CD8-positive, alpha-beta memory T cell (primary cell): ENCODE measurements at regions of chr7 and their contacts with region 1.

Region 1: GRCh38 chr7:139645572-139646523 is 122.4 kb downstream of the CLEC2L start:
- DNase-seq: peak; percentile 65 to 82 (median 75)
- H3K4me3 ChIP-seq: no peak overlapping the region
- H3K4me3 Mint-ChIP-seq: no peak overlapping the region
- H3K27ac ChIP-seq: no peak overlapping the region
- H3K27ac Mint-ChIP-seq: peak overlapping the region in 3 of 8 donors; percentile 56 to 89 (median 63)
- H3K4me1 ChIP-seq: peaks cover 76% of the 10 kb centered on the region
- H3K4me1 Mint-ChIP-seq: peaks cover 25 to 44% (median 29%) of the 10 kb centered on the region in 3 donors
- H3K27me3 ChIP-seq: no peaks in the 10 kb centered on the region
- H3K27me3 Mint-ChIP-seq: no peaks in the 10 kb centered on the region

Region 2: DNA sequence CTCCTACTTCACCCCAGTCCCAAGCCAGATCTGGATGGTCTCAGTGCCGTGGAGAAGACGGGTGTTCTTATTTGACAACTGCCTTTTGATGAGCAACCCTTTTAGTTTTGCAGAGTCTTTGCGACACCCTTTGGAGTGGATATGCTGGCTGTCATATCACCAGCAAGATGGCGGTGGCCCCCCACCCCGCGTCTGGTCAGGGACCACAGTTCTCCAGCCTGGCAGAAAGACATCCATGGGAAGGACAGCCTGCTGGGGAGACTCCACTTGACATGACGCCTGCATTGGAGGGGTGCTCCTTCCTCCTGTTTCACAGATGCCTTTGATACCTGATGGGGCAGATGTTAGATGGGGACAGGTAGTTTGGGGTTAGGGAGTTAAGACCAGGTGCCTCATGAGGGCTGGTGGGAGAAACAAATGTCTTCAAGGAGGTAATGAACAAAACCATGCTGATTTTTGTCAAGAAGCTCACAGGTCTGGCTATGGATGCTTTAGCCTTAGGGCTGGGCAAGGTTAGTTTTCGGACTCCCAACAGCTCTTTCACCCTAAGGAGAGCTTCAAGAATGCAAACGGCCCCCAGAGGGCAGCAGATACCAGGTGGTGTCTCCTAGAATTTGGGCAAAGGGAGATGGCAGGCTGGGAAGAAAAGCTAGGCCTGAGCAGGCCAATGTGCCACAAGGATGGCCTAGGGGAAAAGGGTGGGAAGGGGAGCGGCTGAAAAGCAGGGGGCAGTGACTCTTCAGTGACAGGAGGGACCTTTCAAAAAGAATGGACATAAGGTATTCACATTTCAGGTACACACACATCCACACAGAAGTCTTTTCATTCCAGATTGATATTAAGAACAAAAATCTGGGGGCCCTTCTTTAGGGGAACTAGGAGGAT is 27.1 kb before region 1 on chr7:
- CTCF ChIA-PET with region 1: interaction called, 19 read pairs
- POLR2A ChIA-PET with region 1: no interaction called
- DNase-seq: peak in 1 of 5 donors; percentile 43
- H3K4me3 ChIP-seq: no peak overlapping the region
- H3K4me3 Mint-ChIP-seq: no peak overlapping the region
- H3K27ac ChIP-seq: no peak overlapping the region
- H3K27ac Mint-ChIP-seq: peak overlapping the region in 2 of 8 donors; percentile 38 to 51
- H3K4me1 ChIP-seq: no peaks in the 10 kb centered on the region
- H3K4me1 Mint-ChIP-seq: peaks cover 0 to 2% (median 0%) of the 10 kb centered on the region in 3 donors
- H3K27me3 ChIP-seq: no peaks in the 10 kb centered on the region
- H3K27me3 Mint-ChIP-seq: no peaks in the 10 kb centered on the region

Region 3: DNA sequence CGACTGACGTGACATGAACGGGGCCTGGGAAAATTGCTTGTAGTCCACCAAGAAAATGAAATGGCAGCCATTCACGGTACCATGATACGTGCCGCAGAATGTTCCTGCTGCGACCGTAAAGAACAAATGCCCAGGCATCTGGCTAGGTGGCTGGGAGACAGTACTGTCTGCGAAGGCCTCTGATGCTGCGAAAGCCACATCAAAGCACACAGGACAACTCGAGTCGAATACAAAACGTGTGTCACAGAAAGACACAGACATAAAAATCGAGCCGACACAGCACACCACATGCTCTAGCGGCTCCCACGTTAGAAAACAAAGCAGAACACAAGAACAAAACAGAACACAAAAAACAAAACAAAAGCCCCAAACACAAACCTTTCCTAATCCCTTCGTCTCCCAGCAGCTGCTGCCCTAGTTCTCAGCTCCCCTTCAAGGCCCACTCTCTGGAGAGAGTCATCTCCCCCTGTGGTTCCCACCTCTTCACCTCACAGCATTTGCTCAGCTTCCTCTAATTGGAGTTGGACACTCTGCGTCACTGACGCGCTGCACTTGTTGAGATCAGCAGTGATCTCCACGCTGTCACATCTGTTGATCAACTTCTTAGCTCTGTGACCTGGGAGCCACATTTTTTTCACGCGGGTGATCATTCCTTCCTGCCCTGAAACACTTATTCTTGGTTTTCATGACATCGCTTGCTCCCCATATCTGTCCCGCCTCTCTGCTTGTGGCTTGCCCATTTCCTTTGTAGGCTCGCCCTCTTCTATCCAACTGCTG is 10.1 kb before region 1 on chr7:
- CTCF ChIA-PET with region 1: interaction called, 10 read pairs
- POLR2A ChIA-PET with region 1: interaction called, 3 read pairs
- DNase-seq: peak in 3 of 5 donors; percentile 80 to 84 (median 84)
- H3K4me3 ChIP-seq: peak overlapping the region; percentile 11
- H3K4me3 Mint-ChIP-seq: peak overlapping the region; percentile 1 to 75 (median 66)
- H3K27ac ChIP-seq: no peak overlapping the region
- H3K27ac Mint-ChIP-seq: peak overlapping the region in 7 of 8 donors; percentile 73 to 95 (median 88)
- H3K4me1 ChIP-seq: peaks cover 61% of the 10 kb centered on the region
- H3K4me1 Mint-ChIP-seq: peaks cover 22 to 34% (median 26%) of the 10 kb centered on the region in 3 donors
- H3K27me3 ChIP-seq: no peaks in the 10 kb centered on the region
- H3K27me3 Mint-ChIP-seq: peaks cover 0 to 4% of the 10 kb centered on the region in 2 donors

Region 4: GRCh38 chr7:139875821-139876241 is 230.0 kb after region 1 on chr7:
- CTCF ChIA-PET with region 1: no interaction called
- POLR2A ChIA-PET with region 1: no interaction called
- DNase-seq: no peak
- H3K4me3 ChIP-seq: no peak overlapping the region
- H3K4me3 Mint-ChIP-seq: no peak overlapping the region
- H3K27ac ChIP-seq: no peak overlapping the region
- H3K27ac Mint-ChIP-seq: no peak overlapping the region
- H3K4me1 ChIP-seq: no peaks in the 10 kb centered on the region
- H3K4me1 Mint-ChIP-seq: peaks cover 0 to 3% (median 2%) of the 10 kb centered on the region in 3 donors
- H3K27me3 ChIP-seq: no peaks in the 10 kb centered on the region
- H3K27me3 Mint-ChIP-seq: peaks cover 2 to 9% of the 10 kb centered on the region in 2 donors

Region 5: DNA sequence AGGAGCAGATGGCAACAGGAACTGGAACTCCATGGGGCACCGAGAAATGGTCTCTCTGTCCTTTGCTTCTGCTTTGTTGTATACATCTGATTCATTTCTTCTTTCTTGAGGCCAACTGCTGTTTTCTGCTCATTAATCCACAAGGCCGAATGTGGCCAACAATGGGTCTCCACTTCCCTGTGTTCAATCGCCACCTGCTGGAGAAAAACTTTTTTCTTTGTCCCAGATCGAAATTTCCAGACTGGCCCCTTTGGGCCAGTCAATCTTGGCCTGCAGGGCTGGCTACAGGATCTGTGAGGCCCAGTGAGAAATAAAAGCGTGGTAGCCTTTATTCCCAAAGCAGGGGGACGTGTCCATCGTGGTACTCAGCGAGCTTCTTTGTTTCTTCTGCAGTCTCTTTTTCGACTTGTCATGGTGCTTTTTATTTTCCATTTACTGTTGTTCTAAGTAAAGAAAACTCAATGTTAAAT is 358.1 kb after region 1 on chr7:
- CTCF ChIA-PET with region 1: interaction called, 31 read pairs
- POLR2A ChIA-PET with region 1: no interaction called
- DNase-seq: peak in 1 of 5 donors; percentile 29
- H3K4me3 ChIP-seq: no peak overlapping the region
- H3K4me3 Mint-ChIP-seq: no peak overlapping the region
- H3K27ac ChIP-seq: no peak overlapping the region
- H3K27ac Mint-ChIP-seq: peak overlapping the region in 1 of 8 donors; percentile 86
- H3K4me1 ChIP-seq: no peaks in the 10 kb centered on the region
- H3K4me1 Mint-ChIP-seq: no peaks in the 10 kb centered on the region
- H3K27me3 ChIP-seq: no peaks in the 10 kb centered on the region
- H3K27me3 Mint-ChIP-seq: peaks cover 0 to 4% of the 10 kb centered on the region in 2 donors